B cell (primary cell): ENCODE measurements at regions of chr3 and their contacts with region 1.

Region 1: DNA sequence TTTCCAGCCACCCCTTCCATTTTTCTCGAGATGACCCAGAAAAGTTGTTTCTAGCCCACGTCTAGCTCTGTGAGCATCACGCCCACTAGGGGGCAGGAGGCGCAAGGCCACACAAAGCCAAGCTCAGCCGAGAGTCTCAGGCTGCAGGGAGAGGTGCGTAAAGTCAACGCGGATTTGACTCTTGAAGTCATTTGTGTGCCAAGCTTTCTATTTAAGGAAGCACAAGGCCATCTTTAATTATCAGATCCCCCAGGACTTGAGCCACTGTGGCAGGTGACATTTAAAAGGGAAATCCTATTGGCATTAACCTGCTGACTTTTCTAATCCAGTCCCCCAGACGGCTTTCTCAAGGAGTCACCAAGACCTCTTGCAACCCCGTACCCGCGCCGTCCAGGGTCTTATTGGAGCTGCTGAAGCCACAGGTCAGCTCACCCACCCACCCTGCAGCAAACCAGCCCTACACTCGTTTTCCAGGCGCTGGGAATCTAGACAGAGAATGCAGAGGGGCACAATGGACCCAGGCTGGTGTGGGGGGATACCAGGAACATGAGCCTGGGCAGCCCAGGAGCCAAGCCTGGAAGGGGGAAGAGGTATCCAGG is 62.1 kb downstream of the CAPN7 start:
- DNase-seq: peak; percentile 87
- ATAC-seq: peak; percentile 41
- H3K4me3 ChIP-seq: no peak overlapping the region
- H3K4me3 Mint-ChIP-seq: peak overlapping the region; percentile 39
- H3K27ac ChIP-seq: no peak overlapping the region
- H3K27ac Mint-ChIP-seq: no peak overlapping the region
- H3K4me1 ChIP-seq: peaks cover 71 to 79% of the 10 kb centered on the region in 2 donors
- H3K4me1 Mint-ChIP-seq: peaks cover 81% of the 10 kb centered on the region
- H3K27me3 ChIP-seq: no peaks in the 10 kb centered on the region
- H3K27me3 Mint-ChIP-seq: no peaks in the 10 kb centered on the region
- CTCF ChIP-seq: peak; percentile 92

Region 2: GRCh38 chr3:15256861-15257341 is 11.2 kb before region 1 on chr3:
- CTCF ChIA-PET with region 1: interaction called, 13 read pairs
- POLR2A ChIA-PET with region 1: no interaction called
- intact Hi-C with region 1: no loop called
- DNase-seq: no peak
- ATAC-seq: no peak
- H3K4me3 ChIP-seq: no peak overlapping the region
- H3K4me3 Mint-ChIP-seq: no peak overlapping the region
- H3K27ac ChIP-seq: peak overlapping the region in 1 of 2 donors; percentile 34
- H3K27ac Mint-ChIP-seq: peak overlapping the region; percentile 42
- H3K4me1 ChIP-seq: no peaks in the 10 kb centered on the region
- H3K4me1 Mint-ChIP-seq: peaks cover 4% of the 10 kb centered on the region
- H3K27me3 ChIP-seq: no peaks in the 10 kb centered on the region
- H3K27me3 Mint-ChIP-seq: no peaks in the 10 kb centered on the region
- CTCF ChIP-seq: no peak

Region 3: DNA sequence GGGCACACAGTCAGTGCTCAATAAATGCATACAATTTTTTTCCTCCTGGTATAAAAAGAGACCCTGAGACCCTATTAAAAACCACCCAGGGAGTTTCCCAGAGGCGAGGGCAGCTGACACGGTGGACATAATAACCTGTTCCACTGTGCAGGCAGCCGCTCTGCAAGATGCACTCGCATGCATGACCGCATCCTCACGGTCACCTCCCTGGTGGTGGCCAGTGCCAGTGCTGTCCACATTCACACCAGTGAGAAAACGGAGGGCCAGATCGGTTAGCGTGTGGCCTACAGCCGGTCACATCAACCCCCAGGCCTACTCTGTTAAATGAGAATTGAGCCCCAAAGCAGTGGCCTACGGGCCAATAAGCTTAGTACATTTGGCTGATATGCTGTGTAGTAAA is 39.4 kb after region 1 on chr3:
- CTCF ChIA-PET with region 1: interaction called, 9 read pairs
- POLR2A ChIA-PET with region 1: interaction called, 4 read pairs
- intact Hi-C with region 1: loop called (anchors 1 kb)
- DNase-seq: no peak
- ATAC-seq: no peak
- H3K4me3 ChIP-seq: no peak overlapping the region
- H3K4me3 Mint-ChIP-seq: no peak overlapping the region
- H3K27ac ChIP-seq: peak overlapping the region in 1 of 2 donors; percentile 59
- H3K27ac Mint-ChIP-seq: peak overlapping the region; percentile 50
- H3K4me1 ChIP-seq: peaks cover 68 to 82% of the 10 kb centered on the region in 2 donors
- H3K4me1 Mint-ChIP-seq: peaks cover 84% of the 10 kb centered on the region
- H3K27me3 ChIP-seq: no peaks in the 10 kb centered on the region
- H3K27me3 Mint-ChIP-seq: no peaks in the 10 kb centered on the region
- CTCF ChIP-seq: no peak

Region 4: GRCh38 chr3:15345608-15346137 is 77.5 kb after region 1 on chr3:
- CTCF ChIA-PET with region 1: interaction called, 37 read pairs
- POLR2A ChIA-PET with region 1: interaction called, 4 read pairs
- intact Hi-C with region 1: no loop called
- DNase-seq: peak; percentile 87
- ATAC-seq: peak; percentile 89
- H3K4me3 ChIP-seq: peak overlapping the region in 1 of 5 experiments; percentile 7
- H3K4me3 Mint-ChIP-seq: peak overlapping the region; percentile 76
- H3K27ac ChIP-seq: peak overlapping the region; percentile 92 to 94
- H3K27ac Mint-ChIP-seq: peak overlapping the region; percentile 99
- H3K4me1 ChIP-seq: peaks cover 73 to 80% of the 10 kb centered on the region in 2 donors
- H3K4me1 Mint-ChIP-seq: peaks cover 71% of the 10 kb centered on the region
- H3K27me3 ChIP-seq: no peaks in the 10 kb centered on the region
- H3K27me3 Mint-ChIP-seq: no peaks in the 10 kb centered on the region
- CTCF ChIP-seq: no peak

Region 5: GRCh38 chr3:15367059-15367458 is 98.9 kb after region 1 on chr3:
- CTCF ChIA-PET with region 1: interaction called, 36 read pairs
- POLR2A ChIA-PET with region 1: no interaction called
- intact Hi-C with region 1: no loop called
- DNase-seq: no peak
- ATAC-seq: no peak
- H3K4me3 ChIP-seq: no peak overlapping the region
- H3K4me3 Mint-ChIP-seq: peak overlapping the region; percentile 52
- H3K27ac ChIP-seq: no peak overlapping the region
- H3K27ac Mint-ChIP-seq: peak overlapping the region; percentile 53
- H3K4me1 ChIP-seq: peaks cover 38 to 42% of the 10 kb centered on the region in 2 donors
- H3K4me1 Mint-ChIP-seq: peaks cover 52% of the 10 kb centered on the region
- H3K27me3 ChIP-seq: no peaks in the 10 kb centered on the region
- H3K27me3 Mint-ChIP-seq: no peaks in the 10 kb centered on the region
- CTCF ChIP-seq: no peak

Region 6: GRCh38 chr3:15399970-15400369 is 131.8 kb after region 1 on chr3:
- CTCF ChIA-PET with region 1: interaction called, 421 read pairs
- POLR2A ChIA-PET with region 1: interaction called, 6 read pairs
- intact Hi-C with region 1: loop called (anchors 1 kb)
- DNase-seq: no peak
- ATAC-seq: no peak
- H3K4me3 ChIP-seq: no peak overlapping the region
- H3K4me3 Mint-ChIP-seq: no peak overlapping the region
- H3K27ac ChIP-seq: no peak overlapping the region
- H3K27ac Mint-ChIP-seq: no peak overlapping the region
- H3K4me1 ChIP-seq: peaks cover 24 to 31% of the 10 kb centered on the region in 2 donors
- H3K4me1 Mint-ChIP-seq: peaks cover 39% of the 10 kb centered on the region
- H3K27me3 ChIP-seq: no peaks in the 10 kb centered on the region
- H3K27me3 Mint-ChIP-seq: no peaks in the 10 kb centered on the region
- CTCF ChIP-seq: no peak

Region 7: DNA sequence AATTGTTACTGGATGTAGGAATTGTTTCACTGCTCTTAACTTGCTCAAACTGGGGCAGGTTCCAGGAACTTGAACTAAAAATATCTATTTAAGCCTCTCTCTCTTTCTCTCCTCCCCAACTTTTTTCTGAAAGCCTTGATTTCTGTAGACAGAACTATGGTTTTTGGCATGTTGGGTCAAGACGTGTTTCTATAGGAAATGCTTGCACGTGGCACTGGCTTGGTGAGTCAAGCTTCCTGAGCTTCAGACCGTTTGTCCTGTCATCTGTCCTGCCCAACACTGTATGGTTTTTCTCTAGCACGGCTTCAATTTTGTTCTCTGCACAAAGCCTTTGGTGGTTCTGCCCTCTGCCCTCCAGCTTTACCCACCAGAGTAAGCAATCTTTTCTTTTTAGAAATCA is 172.8 kb after region 1 on chr3:
- CTCF ChIA-PET with region 1: no interaction called
- POLR2A ChIA-PET with region 1: no interaction called
- intact Hi-C with region 1: no loop called
- DNase-seq: no peak
- ATAC-seq: no peak
- H3K4me3 ChIP-seq: no peak overlapping the region
- H3K4me3 Mint-ChIP-seq: no peak overlapping the region
- H3K27ac ChIP-seq: no peak overlapping the region
- H3K27ac Mint-ChIP-seq: no peak overlapping the region
- H3K4me1 ChIP-seq: no peaks in the 10 kb centered on the region
- H3K4me1 Mint-ChIP-seq: no peaks in the 10 kb centered on the region
- H3K27me3 ChIP-seq: no peaks in the 10 kb centered on the region
- H3K27me3 Mint-ChIP-seq: no peaks in the 10 kb centered on the region
- CTCF ChIP-seq: no peak